Ascending aorta (tissue), 2 donors: ENCODE measurements at regions of chr22 and their contacts with region 1.

Region 1: GRCh38 chr22:39253435-39254070 is 8.8 kb upstream of the PDGFB start:
- DNase-seq: peak; percentile 55 to 88
- H3K4me3 ChIP-seq: peak overlapping the region in 1 of 2 donors; percentile 38
- H3K27ac ChIP-seq: peak overlapping the region; percentile 79 to 83
- H3K4me1 ChIP-seq: peaks cover 21 to 44% of the 10 kb centered on the region in 2 donors
- H3K27me3 ChIP-seq: no peaks in the 10 kb centered on the region
- CTCF ChIP-seq: no peak

Region 2: DNA sequence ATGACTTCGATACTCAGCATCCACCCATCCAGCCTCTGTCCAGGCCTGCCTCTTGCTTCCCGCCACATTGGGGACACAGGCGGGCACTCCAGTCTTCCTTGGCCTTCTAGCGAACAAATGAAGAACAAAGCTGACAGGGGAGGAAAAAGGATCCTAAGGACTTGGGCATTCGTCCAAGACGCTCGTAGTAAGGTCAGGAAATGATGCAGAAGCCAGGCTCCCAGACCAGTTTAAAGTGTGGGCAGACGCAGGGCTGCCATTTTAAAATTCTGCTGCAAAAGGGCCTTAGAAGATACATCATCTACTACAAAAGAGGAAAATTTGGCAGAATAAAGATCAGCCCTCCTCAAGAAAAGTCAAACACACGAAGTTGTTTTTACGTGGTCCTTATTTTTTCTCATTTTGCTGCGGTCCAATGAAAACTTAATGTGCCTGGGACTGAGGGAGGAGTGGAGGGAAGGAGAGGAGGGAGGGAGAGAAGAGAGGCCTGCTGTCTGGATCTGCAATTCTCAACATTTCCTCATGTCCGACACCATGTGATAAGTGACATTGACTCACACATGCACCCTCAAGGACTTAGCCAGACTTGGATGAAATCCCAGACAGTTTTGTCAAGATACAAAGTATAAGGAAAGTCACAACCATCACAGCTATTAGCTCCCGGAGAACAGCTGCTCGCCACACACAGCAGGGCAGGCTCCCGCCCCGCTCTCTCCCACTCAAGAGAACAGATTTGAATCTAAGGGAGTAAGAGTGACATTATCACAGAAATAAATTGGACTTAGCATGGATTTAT is 465.3 kb before region 1 on chr22:
- intact Hi-C with region 1: loop called (anchors 10 kb)
- DNase-seq: peak in 1 of 2 donors; percentile 73
- H3K4me3 ChIP-seq: no peak overlapping the region
- H3K27ac ChIP-seq: peak overlapping the region; percentile 76 to 83
- H3K4me1 ChIP-seq: peaks cover 3 to 42% of the 10 kb centered on the region in 2 donors
- H3K27me3 ChIP-seq: no peaks in the 10 kb centered on the region
- CTCF ChIP-seq: no peak

Region 3: DNA sequence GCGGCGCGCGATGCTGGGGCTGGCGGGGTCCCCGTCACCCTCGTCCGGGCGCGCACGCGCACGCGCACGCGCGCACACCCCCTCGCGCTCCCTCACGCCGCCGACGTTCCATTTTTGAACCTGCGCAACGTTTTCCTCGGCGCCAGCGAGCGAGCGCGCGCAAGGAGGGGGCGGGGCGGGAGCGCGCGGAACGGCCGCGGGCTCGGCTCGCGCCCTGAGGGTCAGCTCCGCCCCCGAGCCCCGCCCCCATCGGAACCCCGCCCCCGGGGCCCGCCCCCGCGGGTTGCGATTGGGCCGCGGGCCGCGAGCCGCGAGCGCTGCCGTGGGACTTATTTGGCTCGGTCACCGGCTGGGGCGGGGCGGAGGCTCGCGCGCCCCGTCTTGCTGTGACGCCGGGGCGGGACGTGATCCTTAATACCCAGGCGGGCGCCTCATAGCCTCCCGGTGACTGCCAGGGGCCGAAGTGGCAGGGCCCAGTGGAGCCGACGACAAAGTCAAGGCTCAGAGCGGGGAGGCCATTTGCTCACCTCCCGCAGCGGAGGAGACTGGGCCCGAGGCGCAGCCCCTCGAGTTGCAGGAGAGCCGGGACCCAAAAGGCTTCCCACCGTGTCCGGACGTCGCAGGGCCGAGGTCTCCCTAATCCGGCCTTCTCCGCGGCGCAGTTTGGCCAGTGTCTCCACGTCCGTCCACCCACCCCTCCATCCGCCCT is 100.9 kb before region 1 on chr22 and contains the start of gene CBX7:
- intact Hi-C with region 1: loop called (anchors 5 kb)
- DNase-seq: peak; percentile 84 to 98
- H3K4me3 ChIP-seq: peak within 1 kb of the TSS; percentile 88 to 92
- H3K27ac ChIP-seq: peak within 1 kb of the TSS; percentile 93 to 96
- H3K4me1 ChIP-seq: peaks cover 6 to 24% of the 10 kb centered on the region in 2 donors
- H3K27me3 ChIP-seq: no peaks in the 10 kb centered on the region
- CTCF ChIP-seq: no peak
- total RNA-seq, gene CBX7: 261 TPM

Region 4: GRCh38 chr22:39170825-39171622 is 82.5 kb before region 1 on chr22:
- intact Hi-C with region 1: loop called (anchors 5 kb)
- DNase-seq: peak in 1 of 2 donors; percentile 88
- H3K4me3 ChIP-seq: peak overlapping the region in 1 of 2 donors; percentile 31
- H3K27ac ChIP-seq: no peak overlapping the region
- H3K4me1 ChIP-seq: peaks cover 22 to 23% of the 10 kb centered on the region in 2 donors
- H3K27me3 ChIP-seq: no peaks in the 10 kb centered on the region
- CTCF ChIP-seq: peak; percentile 95 to 98 (median 96)

Region 5: GRCh38 chr22:39308614-39309363 is 55.2 kb after region 1 on chr22:
- intact Hi-C with region 1: loop called (anchors 2 kb)
- DNase-seq: peak; percentile 50 to 92
- H3K4me3 ChIP-seq: peak overlapping the region; percentile 1 to 50
- H3K27ac ChIP-seq: peak overlapping the region; percentile 78 to 80
- H3K4me1 ChIP-seq: peaks cover 0 to 11% of the 10 kb centered on the region in 2 donors
- H3K27me3 ChIP-seq: no peaks in the 10 kb centered on the region
- CTCF ChIP-seq: peak in 1 of 3 experiments; percentile 14

Region 6: GRCh38 chr22:39318940-39319269 is 65.4 kb after region 1 on chr22:
- intact Hi-C with region 1: no loop called
- DNase-seq: no peak
- H3K4me3 ChIP-seq: peak overlapping the region; percentile 83 to 92
- H3K27ac ChIP-seq: peak overlapping the region; percentile 93 to 96
- H3K4me1 ChIP-seq: peaks cover 11 to 34% of the 10 kb centered on the region in 2 donors
- H3K27me3 ChIP-seq: no peaks in the 10 kb centered on the region
- CTCF ChIP-seq: no peak

Region 7: DNA sequence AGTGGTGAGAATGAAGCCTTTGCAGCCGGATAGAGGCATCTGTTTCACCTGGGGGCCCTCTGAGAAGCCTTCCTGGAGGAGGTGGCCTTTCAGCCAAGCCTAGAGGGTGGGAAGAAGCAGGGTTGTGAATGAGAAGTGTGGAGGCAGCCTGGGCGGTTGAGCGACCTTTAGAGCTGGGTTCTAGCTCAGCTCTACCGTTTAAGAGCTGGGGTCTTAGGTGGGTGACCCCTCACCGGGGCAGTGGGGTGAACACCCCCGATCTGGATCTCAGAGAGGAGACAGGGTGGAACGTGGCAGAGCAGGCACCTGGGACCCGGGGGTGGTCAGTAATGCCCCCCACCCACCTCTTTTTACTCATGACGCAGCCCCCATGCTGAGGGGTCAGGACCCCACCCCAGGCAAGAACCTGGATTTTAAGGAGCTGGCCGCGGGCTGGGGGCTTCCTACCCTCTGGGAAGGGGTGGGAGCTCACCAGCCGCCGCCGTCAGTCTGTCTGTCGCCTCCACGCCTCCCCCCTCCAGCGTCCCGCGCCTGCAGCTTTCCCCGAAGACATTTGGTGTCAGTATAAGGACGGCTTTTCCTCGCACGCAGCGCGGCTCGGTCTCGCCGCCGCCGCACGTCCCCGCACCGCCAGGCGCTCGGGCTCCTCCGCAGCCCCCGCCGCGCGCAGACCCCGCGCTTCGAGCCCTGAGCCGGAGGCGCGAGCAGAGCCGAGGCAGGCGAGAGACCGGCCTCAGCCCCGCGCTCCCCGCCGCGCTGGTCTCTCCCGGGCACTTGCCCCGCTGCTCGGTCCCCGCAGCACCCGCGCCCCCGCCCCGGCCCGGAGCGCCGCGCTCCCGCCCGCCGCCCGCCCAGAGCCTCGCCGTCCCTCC is 303.7 kb after region 1 on chr22:
- intact Hi-C with region 1: no loop called
- DNase-seq: no peak
- H3K4me3 ChIP-seq: peak overlapping the region; percentile 42 to 55
- H3K27ac ChIP-seq: no peak overlapping the region
- H3K4me1 ChIP-seq: peaks cover 0 to 6% of the 10 kb centered on the region in 2 donors
- H3K27me3 ChIP-seq: peaks cover 13% of the 10 kb centered on the region
- CTCF ChIP-seq: no peak